Common myeloid progenitor, CD34-positive (primary cell): ENCODE measurements at regions of chr9 and their contacts with region 1.

Region 1: DNA sequence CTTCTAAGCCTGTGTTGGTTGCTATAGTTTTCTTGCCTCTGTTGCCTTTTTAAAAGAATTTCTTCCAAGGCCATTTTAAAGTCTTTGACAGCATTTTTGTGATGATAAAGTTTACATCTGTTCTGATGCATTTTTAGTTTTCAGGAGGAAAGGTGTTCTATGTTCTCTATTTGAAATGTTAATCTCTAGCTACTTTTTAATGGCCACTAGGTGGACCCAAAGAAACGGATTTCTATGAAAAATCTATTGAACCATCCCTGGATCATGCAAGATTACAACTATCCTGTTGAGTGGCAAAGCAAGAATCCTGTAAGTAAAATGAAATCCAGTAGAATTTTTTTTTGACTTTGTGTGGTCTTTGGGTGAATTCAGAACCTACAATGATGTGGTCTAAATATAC is 60.2 kb downstream of the MELK start:
- DNase-seq: peak; percentile 20 to 62 (median 50)
- H3K4me3 ChIP-seq: no peak overlapping the region
- H3K27ac ChIP-seq: no peak overlapping the region
- H3K4me1 ChIP-seq: no peaks in the 10 kb centered on the region
- H3K27me3 ChIP-seq: no peaks in the 10 kb centered on the region

Region 2: GRCh38 chr9:36728651-36729520 is 96.0 kb after region 1 on chr9:
- CTCF ChIA-PET with region 1: interaction called, 166 read pairs
- POLR2A ChIA-PET with region 1: interaction called, 4 read pairs
- DNase-seq: peak; percentile 56 to 74 (median 68)
- H3K4me3 ChIP-seq: no peak overlapping the region
- H3K27ac ChIP-seq: no peak overlapping the region
- H3K4me1 ChIP-seq: peaks cover 0 to 2% (median 0%) of the 10 kb centered on the region in 4 experiments
- H3K27me3 ChIP-seq: peaks cover 0 to 2% (median 0%) of the 10 kb centered on the region in 5 experiments